GM12878 (cell line): ENCODE measurements at regions of chr17 and their contacts with region 1.

Region 1: DNA sequence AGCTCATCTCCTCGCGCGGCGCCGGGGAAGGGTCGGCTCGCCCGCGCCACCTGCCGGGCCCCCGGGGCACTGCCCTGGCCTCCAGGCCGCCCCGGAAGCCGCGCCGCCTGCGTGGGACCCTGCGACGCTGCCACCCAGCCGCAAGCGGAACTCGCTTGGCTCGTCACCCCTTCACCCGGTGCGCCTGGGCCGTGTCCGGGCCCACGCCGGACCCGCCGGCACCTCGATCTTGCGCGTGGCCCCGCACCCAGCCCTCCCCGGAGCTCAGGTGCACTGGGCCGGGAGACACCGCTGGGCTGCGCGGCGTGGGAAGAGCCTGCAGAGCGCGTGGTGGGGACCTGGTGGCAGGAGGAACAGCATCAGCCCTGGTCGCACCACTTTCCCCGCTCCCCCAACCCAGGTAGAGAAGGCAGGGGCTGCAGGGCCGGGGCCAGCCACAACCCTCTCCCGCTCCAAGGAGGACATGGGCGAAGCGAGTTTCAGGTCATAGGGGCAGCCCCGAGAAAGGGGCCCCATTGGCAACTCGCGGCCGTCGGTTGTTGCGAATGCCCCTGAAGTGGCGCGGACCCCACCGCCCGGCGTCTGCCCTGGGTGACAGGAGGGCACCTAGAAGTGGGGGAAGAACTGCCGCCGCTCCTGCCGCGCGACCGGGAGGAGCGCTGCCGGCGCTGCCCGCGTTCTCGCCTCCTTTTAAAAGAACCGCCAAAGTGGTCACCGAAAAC is 363 bp upstream of the MIF4GD start:
- DNase-seq: no peak
- ATAC-seq: peak; percentile 82
- H3K4me3 ChIP-seq: peak overlapping the region; percentile 70
- H3K27ac ChIP-seq: peak overlapping the region; percentile 91
- H3K4me1 ChIP-seq: peaks cover 24% of the 10 kb centered on the region
- H3K27me3 ChIP-seq: no peaks in the 10 kb centered on the region
- CTCF ChIP-seq: peak; percentile 66 to 87 (median 79); a peak in 4 of 6 replicates
- EP300 ChIP-seq: no peak
- POLR2A ChIP-seq: peak; percentile 79
- RAD21 ChIP-seq: peak; percentile 40; the same call in 1 of the 2 replicates

Region 2: DNA sequence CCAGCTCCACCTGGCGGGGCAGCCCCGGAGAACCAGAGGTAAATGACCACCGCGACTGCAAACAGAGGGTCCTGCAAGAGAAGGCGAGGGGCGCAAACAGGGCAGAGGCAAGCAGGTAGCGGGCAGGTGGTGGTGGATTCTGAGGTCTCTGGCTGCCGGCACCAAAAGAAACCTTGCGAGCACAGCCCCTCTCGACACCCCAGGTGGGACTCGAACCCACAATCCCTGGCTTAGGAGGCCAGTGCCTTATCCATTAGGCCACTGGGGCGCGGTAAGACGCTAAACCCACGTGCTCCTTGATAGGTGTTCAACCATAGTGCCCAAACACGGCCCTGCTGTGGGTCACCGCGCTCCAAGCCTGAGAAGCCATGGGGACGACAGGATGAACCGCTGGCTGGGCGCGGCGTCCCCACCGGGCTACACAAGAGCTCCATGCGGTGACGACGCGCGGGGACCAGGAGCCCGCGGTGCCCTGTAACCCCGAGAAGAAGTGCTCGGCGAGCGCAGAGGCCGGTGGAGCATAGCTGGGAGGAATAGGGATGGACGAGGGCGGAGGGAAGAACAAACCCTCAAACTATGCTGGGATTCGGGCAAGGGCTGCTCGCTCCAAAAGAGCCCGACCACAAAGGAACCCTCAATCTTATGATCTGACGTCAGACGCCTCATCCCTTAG is 237.0 kb before region 1 on chr17:
- CTCF ChIA-PET with region 1: no interaction called
- POLR2A ChIA-PET with region 1: no interaction called
- RAD21 ChIA-PET with region 1: no interaction called
- SMC1A ChIA-PET with region 1: no interaction called
- in situ Hi-C with region 1: no loop called
- intact Hi-C with region 1: no loop called
- DNase-seq: peak; percentile 88
- ATAC-seq: peak; percentile 86
- H3K4me3 ChIP-seq: peak overlapping the region; percentile 84
- H3K27ac ChIP-seq: peak overlapping the region; percentile 72
- H3K4me1 ChIP-seq: 0 out of 2 replicates have a peak, but pooled peaks cover 4% of the 10 kb centered on the region
- H3K27me3 ChIP-seq: no peaks in the 10 kb centered on the region
- CTCF ChIP-seq: no peak
- EP300 ChIP-seq: no peak; a peak in 1 of 4 replicates
- POLR2A ChIP-seq: no peak; the same call in none of the 2 replicates
- RAD21 ChIP-seq: no peak

Region 3: GRCh38 chr17:75238684-75239191 is 32.7 kb before region 1 on chr17:
- CTCF ChIA-PET with region 1: interaction called, 25 read pairs
- POLR2A ChIA-PET with region 1: interaction called, 6 read pairs
- RAD21 ChIA-PET with region 1: interaction called, 9 read pairs
- SMC1A ChIA-PET with region 1: interaction called, 10 read pairs
- in situ Hi-C with region 1: no loop called
- intact Hi-C with region 1: no loop called
- DNase-seq: no peak
- ATAC-seq: peak; percentile 96
- H3K4me3 ChIP-seq: no peak overlapping the region
- H3K27ac ChIP-seq: no peak overlapping the region
- H3K4me1 ChIP-seq: peaks cover 28% of the 10 kb centered on the region
- H3K27me3 ChIP-seq: no peaks in the 10 kb centered on the region
- CTCF ChIP-seq: peak; percentile 83 to 94 (median 89)
- EP300 ChIP-seq: no peak
- POLR2A ChIP-seq: peak; percentile 71
- RAD21 ChIP-seq: peak; percentile 67

Region 4: DNA sequence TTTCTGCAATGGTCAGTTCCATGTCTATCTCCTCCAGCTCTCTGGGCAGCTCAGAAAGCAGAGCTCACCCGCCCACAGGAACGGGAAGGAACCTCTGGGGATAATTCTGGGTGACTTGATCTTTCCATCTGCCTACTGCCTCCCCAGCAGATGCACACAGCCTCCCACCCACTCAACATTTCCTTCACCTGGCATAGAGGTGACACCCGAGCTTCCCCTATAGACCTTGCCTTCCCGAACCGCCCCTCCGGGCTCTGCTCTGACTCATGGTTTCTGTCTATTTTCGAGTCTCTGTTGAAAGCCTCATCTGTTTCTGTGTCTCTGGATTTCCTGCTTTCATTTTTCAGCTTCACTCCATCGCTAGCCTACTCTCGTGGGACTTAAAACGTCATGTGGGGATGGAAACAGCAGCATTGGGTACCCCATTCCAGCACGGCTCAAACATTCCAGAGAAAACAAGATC is 21.4 kb before region 1 on chr17:
- CTCF ChIA-PET with region 1: interaction called, 10 read pairs
- POLR2A ChIA-PET with region 1: interaction called, 25 read pairs
- RAD21 ChIA-PET with region 1: interaction called, 11 read pairs
- SMC1A ChIA-PET with region 1: interaction called, 9 read pairs
- in situ Hi-C with region 1: no loop called
- intact Hi-C with region 1: no loop called
- DNase-seq: peak; percentile 79
- ATAC-seq: peak; percentile 98
- H3K4me3 ChIP-seq: peak overlapping the region; percentile 66
- H3K27ac ChIP-seq: peak overlapping the region; percentile 70
- H3K4me1 ChIP-seq: peaks cover 27% of the 10 kb centered on the region
- H3K27me3 ChIP-seq: no peaks in the 10 kb centered on the region
- CTCF ChIP-seq: no peak
- EP300 ChIP-seq: 0 out of 4 replicates have a peak, but pooled peaks of 1 of the 2 experiments have one; percentile 11
- POLR2A ChIP-seq: no peak
- RAD21 ChIP-seq: no peak

Region 5: DNA sequence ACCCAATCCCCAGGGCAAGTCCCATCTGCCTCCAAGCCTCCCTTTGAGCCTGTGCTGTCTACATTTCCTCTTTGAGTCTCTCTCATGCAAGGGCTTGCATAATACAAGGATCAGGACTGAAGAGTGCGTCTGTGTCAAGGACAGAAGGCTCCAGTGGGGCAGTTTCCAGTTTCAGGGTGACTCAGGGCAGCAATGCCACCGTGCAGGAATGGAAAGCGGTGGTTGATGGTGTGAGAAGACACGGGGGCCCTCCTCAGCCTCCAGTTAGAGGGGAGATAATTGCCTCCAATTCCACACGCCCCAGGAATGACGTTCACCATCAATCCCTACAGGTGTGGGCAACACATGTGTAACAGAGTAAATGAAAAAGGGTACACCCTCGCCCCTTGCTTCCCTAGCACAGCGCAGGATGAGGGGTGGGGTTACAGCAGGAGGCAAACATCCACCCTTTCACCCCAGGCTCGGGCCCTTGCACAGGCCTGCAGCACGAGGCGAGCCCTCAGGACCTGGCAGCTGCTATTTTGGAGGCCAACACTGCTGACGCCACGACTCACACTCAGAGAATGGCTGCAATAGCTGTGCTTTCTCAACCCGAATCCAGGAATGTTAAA is 42.7 kb after region 1 on chr17:
- CTCF ChIA-PET with region 1: interaction called, 4 read pairs
- POLR2A ChIA-PET with region 1: interaction called, 4 read pairs
- RAD21 ChIA-PET with region 1: interaction called, 15 read pairs
- SMC1A ChIA-PET with region 1: interaction called, 7 read pairs
- in situ Hi-C with region 1: no loop called
- intact Hi-C with region 1: no loop called
- DNase-seq: no peak
- ATAC-seq: peak; percentile 79
- H3K4me3 ChIP-seq: no peak overlapping the region
- H3K27ac ChIP-seq: peak overlapping the region; percentile 87
- H3K4me1 ChIP-seq: peaks cover 67% of the 10 kb centered on the region
- H3K27me3 ChIP-seq: no peaks in the 10 kb centered on the region
- CTCF ChIP-seq: no peak
- EP300 ChIP-seq: 0 out of 4 replicates have a peak, but pooled peaks of 1 of the 2 experiments have one; percentile 36
- POLR2A ChIP-seq: no peak
- RAD21 ChIP-seq: no peak

Region 6: GRCh38 chr17:75877752-75878173 is 606.4 kb after region 1 on chr17:
- CTCF ChIA-PET with region 1: no interaction called
- POLR2A ChIA-PET with region 1: no interaction called
- RAD21 ChIA-PET with region 1: no interaction called
- SMC1A ChIA-PET with region 1: no interaction called
- in situ Hi-C with region 1: no loop called
- intact Hi-C with region 1: no loop called
- DNase-seq: no peak
- ATAC-seq: peak; percentile 83
- H3K4me3 ChIP-seq: peak overlapping the region; percentile 29; the same call in 1 of the 2 replicates
- H3K27ac ChIP-seq: no peak overlapping the region
- H3K4me1 ChIP-seq: peaks cover 25% of the 10 kb centered on the region
- H3K27me3 ChIP-seq: peaks cover 2% of the 10 kb centered on the region in 2 experiments
- CTCF ChIP-seq: peak; percentile 40 to 50 (median 45); a peak in 5 of 6 replicates
- EP300 ChIP-seq: no peak
- POLR2A ChIP-seq: no peak
- RAD21 ChIP-seq: no peak